MCF 10A (cell line): ENCODE measurements at regions of chr16 and their contacts with region 1.

Region 1: GRCh38 chr16:57213462-57213861 is 27.3 kb downstream of the RSPRY1 start:
- DNase-seq: peak; percentile 86
- H3K4me3 Mint-ChIP-seq: no peak overlapping the region
- H3K27ac Mint-ChIP-seq: peak overlapping the region; percentile 80
- H3K4me1 Mint-ChIP-seq: peaks cover 8% of the 10 kb centered on the region
- H3K27me3 Mint-ChIP-seq: no peaks in the 10 kb centered on the region
- CTCF ChIP-seq: no peak

Region 2: GRCh38 chr16:57194512-57194911 is 18.9 kb before region 1 on chr16:
- CTCF ChIA-PET with region 1: interaction called, 4 read pairs
- POLR2A ChIA-PET with region 1: interaction called, 67 read pairs
- intact Hi-C with region 1: no loop called
- DNase-seq: peak; percentile 71
- H3K4me3 Mint-ChIP-seq: peak overlapping the region; percentile 53
- H3K27ac Mint-ChIP-seq: peak overlapping the region; percentile 85
- H3K4me1 Mint-ChIP-seq: peaks cover 39% of the 10 kb centered on the region
- H3K27me3 Mint-ChIP-seq: no peaks in the 10 kb centered on the region
- CTCF ChIP-seq: no peak